Adrenal gland (tissue), 19 donors: ENCODE measurements at regions of chr1 and their contacts with region 1.

Region 1: GRCh38 chr1:109263597-109264398 is 14.5 kb downstream of the CELSR2 start:
- DNase-seq: peak; percentile 83 to 96 (median 89)
- H3K4me3 ChIP-seq: no peak overlapping the region
- H3K27ac ChIP-seq: no peak overlapping the region
- H3K4me1 ChIP-seq: no peaks in the 10 kb centered on the region
- H3K27me3 ChIP-seq: no peaks in the 10 kb centered on the region
- CTCF ChIP-seq: peak; percentile 86 to 100 (median 100)
- POLR2A ChIP-seq: no peak

Region 2: GRCh38 chr1:109112652-109113285 is 151.0 kb before region 1 on chr1:
- intact Hi-C with region 1: no loop called
- DNase-seq: peak; percentile 90 to 97 (median 93)
- H3K4me3 ChIP-seq: peak overlapping the region in 1 of 4 donors; percentile 43
- H3K27ac ChIP-seq: no peak overlapping the region
- H3K4me1 ChIP-seq: peaks cover 0 to 20% of the 10 kb centered on the region in 2 donors
- H3K27me3 ChIP-seq: peaks cover 22% of the 10 kb centered on the region
- CTCF ChIP-seq: peak; percentile 83 to 99 (median 92)
- POLR2A ChIP-seq: no peak

Region 3: DNA sequence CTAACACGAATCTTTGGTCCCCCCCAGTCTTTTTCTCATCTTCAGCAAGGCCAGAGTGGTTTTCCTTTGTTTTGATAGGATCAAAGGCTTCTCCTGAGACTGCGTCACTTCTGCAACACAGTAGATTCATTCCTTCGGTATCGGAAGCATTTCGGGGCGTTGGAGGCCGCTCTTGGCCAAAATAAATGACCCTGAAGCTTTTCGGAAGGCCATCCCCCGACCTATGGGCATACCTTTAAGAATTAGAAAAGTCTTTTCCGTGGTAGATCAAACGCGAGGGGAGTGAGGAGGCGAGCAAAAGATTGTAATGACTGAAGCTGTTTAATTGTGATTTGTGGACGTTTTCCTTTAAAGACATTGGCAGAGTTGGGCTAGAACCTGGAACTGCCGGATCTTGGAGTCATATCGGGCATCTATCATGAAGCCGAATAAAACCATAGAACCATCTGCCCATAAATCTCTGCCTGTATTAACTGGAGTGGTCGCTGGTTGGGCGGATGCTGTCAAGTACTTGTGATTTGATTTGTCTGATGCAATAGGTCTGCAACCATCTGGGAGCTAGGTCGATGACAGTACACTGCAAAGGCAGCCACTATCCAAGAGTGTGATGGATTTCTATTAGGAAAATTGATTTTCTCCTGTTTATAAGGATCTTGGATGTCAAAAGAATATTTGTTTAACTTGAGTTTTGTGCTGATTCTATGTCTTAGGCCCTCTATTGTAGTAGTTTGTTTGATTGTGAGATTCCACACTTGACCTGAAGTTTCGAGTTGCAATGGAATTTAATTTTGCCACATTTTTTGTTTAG is 49.1 kb before region 1 on chr1:
- intact Hi-C with region 1: loop called in 1 of 2 experiments (anchors 5 kb)
- DNase-seq: peak; percentile 45 to 87 (median 67)
- H3K4me3 ChIP-seq: peak overlapping the region; percentile 3 to 91 (median 60)
- H3K27ac ChIP-seq: peak overlapping the region; percentile 31 to 94 (median 87)
- H3K4me1 ChIP-seq: peaks cover 5 to 42% of the 10 kb centered on the region in 2 donors
- H3K27me3 ChIP-seq: no peaks in the 10 kb centered on the region
- CTCF ChIP-seq: no peak
- POLR2A ChIP-seq: peak; percentile 22 to 40

Region 4: DNA sequence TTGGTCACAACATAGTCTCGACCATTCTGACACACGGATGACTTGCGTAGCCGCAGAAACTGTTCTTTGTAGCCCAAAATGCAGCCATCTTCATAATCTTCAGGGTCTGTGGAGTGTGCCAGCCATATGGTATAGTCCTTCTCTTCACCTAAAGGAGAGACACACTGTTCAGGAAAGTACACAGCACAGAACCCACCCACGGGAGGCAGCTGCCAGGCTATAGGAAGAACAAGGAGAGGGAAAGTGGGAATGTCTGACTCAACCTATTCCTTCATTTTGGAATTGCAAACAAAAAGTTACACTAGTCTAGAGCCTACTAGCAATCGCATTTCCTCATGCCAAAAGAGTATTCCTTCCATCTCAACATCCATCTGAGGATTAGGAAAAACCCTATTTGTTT is 59.2 kb after region 1 on chr1:
- intact Hi-C with region 1: no loop called
- DNase-seq: no peak
- H3K4me3 ChIP-seq: no peak overlapping the region
- H3K27ac ChIP-seq: no peak overlapping the region
- H3K4me1 ChIP-seq: no peaks in the 10 kb centered on the region
- H3K27me3 ChIP-seq: no peaks in the 10 kb centered on the region
- CTCF ChIP-seq: no peak
- POLR2A ChIP-seq: no peak

Region 5: DNA sequence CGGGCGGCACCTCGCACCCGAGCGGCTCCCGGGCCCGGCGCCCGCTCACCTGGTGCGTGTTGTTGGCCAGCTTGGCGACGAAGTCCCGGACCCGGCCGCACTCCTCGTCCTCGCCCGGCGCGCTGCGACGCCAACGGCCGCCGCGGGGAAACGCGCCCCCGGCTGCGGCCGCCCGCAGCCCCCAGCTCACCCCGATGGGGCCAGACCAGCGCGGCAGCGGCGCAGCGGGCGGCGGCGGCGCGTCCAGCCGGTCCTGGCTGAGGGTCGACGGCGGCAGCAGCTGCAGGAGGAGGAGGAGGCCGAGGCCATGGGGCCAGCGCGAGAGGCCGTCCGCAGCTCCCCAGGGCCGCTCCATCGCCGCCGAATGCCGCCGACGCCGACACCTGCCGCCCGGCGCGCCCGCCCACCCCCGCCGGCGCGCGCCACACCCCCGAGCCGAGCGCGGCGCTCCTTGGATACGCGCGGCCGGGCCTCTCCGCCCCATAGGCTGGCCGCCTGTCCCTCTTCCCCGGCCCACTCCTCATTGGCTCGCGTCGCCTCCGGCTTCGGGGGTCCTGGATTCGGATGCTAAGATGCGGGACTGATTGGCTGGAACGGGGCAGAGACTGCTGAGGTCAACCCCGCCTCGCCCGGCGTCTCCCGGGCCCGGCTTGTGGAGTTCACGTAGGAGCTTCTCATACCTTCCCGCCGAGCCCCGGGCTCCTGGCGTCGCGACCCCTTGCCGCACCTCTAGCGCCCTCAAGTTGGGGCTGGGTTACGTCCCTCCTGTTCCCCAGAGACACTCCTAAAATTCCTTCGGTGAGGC is 133.9 kb after region 1 on chr1 and contains the start of gene SORT1:
- intact Hi-C with region 1: loop called (anchors 5 kb)
- DNase-seq: peak; percentile 78 to 93 (median 85)
- H3K4me3 ChIP-seq: peak within 1 kb of the TSS; percentile 26 to 84 (median 41)
- H3K27ac ChIP-seq: peak within 1 kb of the TSS in 3 of 5 donors; percentile 17 to 78 (median 18)
- H3K4me1 ChIP-seq: peaks cover 8 to 57% of the 10 kb centered on the region in 2 donors
- H3K27me3 ChIP-seq: no peaks in the 10 kb centered on the region
- CTCF ChIP-seq: peak in 2 of 6 experiments; percentile 5 to 29
- POLR2A ChIP-seq: peak in 1 of 2 donors; percentile 70
- total RNA-seq, gene SORT1: 20.1 to 56.8 (median 41.8) TPM

Region 6: DNA sequence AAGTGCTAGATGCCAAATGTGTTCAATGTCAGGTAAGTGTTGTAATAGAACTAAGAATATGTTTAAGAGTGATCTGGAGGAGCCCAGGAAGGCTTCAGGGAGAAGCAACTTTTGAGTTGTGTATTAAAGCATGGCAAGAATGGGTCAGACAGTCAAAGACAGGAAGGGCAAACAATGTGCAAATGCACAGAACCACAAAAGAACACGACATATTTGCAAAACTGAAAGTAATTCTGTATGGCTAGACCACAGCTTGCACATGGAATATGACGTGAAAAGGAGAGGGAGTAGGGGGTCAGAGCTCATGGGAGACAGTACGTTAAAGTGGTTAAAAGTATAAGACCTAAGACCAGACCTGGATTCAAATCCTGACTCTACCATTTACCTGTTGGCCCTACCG is 141.0 kb after region 1 on chr1:
- intact Hi-C with region 1: loop called in 1 of 2 experiments (anchors 5 kb)
- DNase-seq: no peak
- H3K4me3 ChIP-seq: no peak overlapping the region
- H3K27ac ChIP-seq: no peak overlapping the region
- H3K4me1 ChIP-seq: no peaks in the 10 kb centered on the region
- H3K27me3 ChIP-seq: no peaks in the 10 kb centered on the region
- CTCF ChIP-seq: no peak
- POLR2A ChIP-seq: no peak